ENCODE measurements at regions of chr9 and their contacts with region 1.

Region 1: GRCh38 chr9:14353222-14354056 is 39.5 kb upstream of the NFIB start:
- DNase-seq: peak; percentile 78
- CTCF ChIP-seq: peak; percentile 92

Region 2: DNA sequence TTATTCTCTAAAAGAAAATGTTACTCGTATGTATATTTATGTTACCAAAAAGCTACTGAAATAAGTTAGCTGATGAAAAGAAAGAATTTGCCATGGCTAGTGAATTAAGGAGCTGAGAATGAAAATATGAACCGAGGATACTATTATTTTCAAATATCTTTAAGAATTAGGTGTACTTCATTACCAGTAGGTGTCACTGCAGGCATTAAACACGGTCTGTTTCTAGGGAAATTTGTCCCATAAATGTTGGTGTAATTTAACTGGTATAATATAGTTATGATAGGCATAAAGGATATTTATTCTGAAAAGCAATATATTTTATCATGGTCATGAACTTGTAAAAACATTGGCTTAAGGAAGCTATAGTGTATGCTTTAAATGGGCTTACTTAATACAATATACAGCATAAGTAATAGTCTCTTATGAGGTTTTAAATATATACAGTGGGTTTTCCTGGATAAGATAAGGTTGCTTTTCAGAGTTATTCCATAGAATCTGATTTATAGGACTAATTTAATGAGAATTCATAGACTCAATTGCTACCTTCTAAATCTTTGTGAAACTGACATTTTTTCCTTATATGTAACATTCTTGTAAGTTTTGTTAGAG is 1001.6 kb before region 1 on chr9:
- CTCF ChIA-PET with region 1: interaction called, 14 read pairs
- POLR2A ChIA-PET with region 1: no interaction called
- DNase-seq: peak; percentile 7
- CTCF ChIP-seq: peak; percentile 32

Region 3: DNA sequence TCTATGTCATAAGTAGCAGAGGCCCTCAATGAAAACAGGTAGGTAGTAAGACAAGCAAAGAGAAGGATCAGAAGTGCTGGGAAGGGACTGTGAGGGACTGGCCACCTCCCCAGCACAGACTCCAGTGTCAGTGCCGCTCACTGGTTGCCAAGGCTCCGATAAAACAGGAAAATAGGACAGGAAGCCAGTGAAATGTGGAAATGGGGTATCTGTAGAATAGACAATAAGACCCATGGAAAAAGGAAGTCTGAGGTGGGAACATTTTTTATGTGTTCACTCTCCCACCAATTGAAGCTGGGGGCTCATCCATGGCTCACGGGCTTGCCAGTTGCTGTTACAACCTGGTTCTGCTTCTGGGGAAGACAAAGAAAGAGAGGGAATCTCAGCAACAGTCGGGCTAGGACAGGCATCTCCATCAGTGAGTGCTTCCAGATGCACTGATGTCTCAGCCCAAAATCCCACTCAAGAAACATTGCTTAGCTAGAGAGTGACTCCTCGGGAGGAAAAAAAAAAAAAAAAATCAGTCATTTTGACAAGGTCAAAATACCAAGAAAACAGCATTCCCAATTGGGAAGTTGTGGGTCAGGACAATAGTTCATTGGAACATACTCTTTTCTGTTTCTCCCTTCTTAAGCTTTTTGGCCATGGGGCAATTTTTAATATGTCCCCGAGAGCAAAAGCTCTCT is 11.9 kb before region 1 on chr9:
- CTCF ChIA-PET with region 1: interaction called, 11 read pairs
- POLR2A ChIA-PET with region 1: no interaction called
- DNase-seq: no peak
- CTCF ChIP-seq: no peak

Region 4: GRCh38 chr9:14369011-14369410 is 15.6 kb after region 1 on chr9:
- CTCF ChIA-PET with region 1: interaction called, 30 read pairs
- POLR2A ChIA-PET with region 1: no interaction called
- DNase-seq: no peak
- CTCF ChIP-seq: no peak

Region 5: DNA sequence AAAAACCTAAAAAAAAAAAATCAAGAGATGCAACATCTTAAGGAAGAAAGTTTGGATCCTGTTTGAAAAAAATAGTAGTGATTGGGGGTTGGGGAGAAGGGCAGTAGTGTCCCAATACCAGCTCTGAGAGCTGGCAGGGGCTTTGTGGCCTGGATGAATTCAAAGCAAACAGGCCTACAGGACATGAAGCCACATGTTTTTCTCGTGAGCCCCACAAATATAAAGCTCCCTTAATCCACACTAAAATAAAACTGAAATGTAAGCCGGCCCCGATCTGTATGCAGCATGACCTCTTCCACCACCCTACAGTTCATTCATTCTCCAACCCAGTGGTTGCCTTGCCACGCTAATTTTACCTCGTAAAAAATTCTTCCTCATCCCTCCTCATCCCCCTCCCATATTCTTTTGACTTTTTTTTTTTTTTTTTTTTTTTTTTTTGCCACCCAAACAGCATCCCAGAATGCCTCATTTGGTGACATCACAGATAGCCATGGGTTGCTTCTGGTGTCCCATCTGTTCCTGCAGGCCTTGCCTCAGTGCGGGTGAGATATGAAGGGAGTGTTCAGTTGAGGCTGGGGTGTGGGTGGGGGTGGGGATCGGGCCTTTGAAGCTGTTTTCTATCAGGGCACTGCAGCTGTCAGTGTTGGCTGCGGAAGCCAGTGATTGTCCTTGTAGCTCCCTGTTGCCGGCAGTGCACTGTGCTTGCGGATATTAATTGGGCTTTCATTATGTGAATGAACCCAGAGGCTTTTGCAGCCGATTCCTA is 42.1 kb after region 1 on chr9:
- CTCF ChIA-PET with region 1: no interaction called
- POLR2A ChIA-PET with region 1: no interaction called
- DNase-seq: no peak
- CTCF ChIP-seq: no peak

Region 6: DNA sequence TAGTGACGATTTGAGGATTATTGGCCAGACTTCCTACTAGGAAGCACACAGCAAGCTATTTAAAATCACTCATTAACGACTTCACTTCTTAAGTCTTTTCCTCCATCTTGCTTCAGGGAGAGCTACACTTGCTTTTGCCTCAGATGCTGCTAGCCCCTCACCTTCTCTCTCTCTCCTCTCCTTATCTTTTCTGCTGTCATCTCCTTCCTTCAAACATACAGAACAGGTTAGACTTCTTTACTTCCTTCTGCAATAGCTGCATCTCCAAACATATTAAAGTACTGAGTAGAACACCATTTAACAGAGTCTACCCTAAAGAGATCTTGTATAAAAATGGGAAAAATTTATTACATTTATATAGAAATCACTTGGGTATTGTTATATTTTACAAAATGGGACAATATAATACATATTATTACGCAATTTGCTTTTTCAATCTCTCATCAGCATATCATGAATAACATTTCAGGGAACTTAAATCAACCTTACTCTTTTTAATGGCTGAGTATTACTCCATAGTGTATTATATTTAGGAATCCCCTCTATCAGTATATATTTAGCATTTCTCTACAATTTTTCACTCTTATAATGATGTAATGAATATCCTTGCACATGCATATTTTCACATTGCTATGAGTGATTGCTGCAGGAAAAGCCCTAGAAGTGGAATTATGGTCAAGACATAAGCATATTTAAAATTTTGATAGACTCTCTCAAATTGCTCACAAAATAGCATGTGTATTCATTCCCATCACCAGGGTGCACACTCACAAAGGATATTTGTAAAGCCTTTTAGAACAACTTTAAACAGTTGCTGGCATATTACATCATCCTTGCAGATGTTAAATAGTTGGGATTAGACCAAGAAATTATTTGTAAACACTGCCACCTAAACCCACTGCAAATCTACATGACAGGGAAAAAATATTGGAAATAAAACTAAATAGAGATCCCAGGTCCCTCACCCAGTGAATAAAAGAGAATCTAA is 125.0 kb after region 1 on chr9:
- CTCF ChIA-PET with region 1: no interaction called
- POLR2A ChIA-PET with region 1: no interaction called
- DNase-seq: no peak
- CTCF ChIP-seq: no peak